WTC11 (cell line): ENCODE measurements at regions of chr5 and their contacts with region 1.

Region 1: GRCh38 chr5:141691867-141692532 is 10.0 kb upstream of the ARAP3 start:
- DNase-seq: peak; percentile 93
- ATAC-seq: peak; percentile 72
- H3K4me3 Mint-ChIP-seq: peak overlapping the region; percentile 69
- H3K27ac Mint-ChIP-seq: no peak overlapping the region
- H3K4me1 Mint-ChIP-seq: peaks cover 30% of the 10 kb centered on the region
- H3K27me3 Mint-ChIP-seq: peaks cover 10% of the 10 kb centered on the region
- CTCF ChIP-seq: peak; percentile 99

Region 2: GRCh38 chr5:141664732-141665461 is 27.1 kb before region 1 on chr5:
- CTCF ChIA-PET with region 1: interaction called, 26 read pairs
- POLR2A ChIA-PET with region 1: interaction called, 3 read pairs
- DNase-seq: peak; percentile 88
- ATAC-seq: peak; percentile 95
- H3K4me3 Mint-ChIP-seq: no peak overlapping the region
- H3K27ac Mint-ChIP-seq: no peak overlapping the region
- H3K4me1 Mint-ChIP-seq: peaks cover 11% of the 10 kb centered on the region
- H3K27me3 Mint-ChIP-seq: no peaks in the 10 kb centered on the region
- CTCF ChIP-seq: peak; percentile 92

Region 3: DNA sequence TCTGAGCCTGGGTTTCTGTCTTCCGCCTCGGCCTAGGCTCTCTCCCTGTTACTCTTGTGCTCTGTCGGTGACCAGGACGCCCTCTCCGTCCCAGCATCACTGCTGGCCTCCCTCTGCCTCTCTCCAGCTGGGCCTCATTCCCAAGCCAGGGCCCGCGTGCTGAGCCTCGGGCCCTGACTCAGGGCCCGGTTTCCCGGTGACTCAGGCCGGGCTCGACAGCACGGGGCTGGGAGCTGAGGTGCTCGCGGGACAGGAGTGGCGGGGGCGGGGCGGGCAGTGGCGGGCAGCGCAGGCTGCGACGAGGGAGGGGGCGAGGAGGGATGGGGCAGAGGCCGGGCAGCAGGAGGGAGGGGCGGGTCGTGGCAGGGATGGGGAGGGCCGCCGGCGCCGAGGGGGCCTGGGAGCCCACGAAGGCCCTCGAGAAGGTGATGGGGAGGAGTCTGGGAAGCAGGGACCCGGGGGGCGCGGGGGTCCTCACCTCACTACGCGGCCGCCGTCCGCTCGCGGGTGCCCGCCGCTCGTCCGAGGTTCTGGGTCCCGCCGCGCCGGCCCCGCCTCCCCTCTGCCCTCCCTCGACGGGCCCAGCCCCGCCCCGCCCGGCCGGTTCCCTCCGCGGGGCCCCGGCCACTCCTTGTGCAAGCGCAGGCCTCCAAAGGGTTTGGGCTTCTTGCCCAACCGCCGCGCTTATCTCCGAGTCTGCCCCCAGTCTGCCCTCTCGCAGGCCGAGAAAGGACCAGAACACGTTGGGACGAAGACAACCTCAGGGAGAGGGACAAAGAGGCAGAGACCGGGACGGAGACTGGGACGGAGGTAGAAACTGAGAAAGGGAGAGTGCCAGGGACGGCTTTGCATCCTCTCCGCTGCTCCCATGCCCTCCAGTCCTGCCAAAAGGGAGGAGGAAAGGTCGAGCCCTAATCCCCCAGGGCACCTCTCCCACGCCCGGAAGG is 10.0 kb before region 1 on chr5 and contains the start of gene ARAP3:
- CTCF ChIA-PET with region 1: interaction called, 36 read pairs
- POLR2A ChIA-PET with region 1: interaction called, 4 read pairs
- DNase-seq: peak; percentile 76
- ATAC-seq: peak; percentile 50
- H3K4me3 Mint-ChIP-seq: peak within 1 kb of the TSS; percentile 84
- H3K27ac Mint-ChIP-seq: peak within 1 kb of the TSS; percentile 96
- H3K4me1 Mint-ChIP-seq: peaks cover 50% of the 10 kb centered on the region
- H3K27me3 Mint-ChIP-seq: no peaks in the 10 kb centered on the region
- CTCF ChIP-seq: no peak
- total RNA-seq, gene ARAP3: 51.2 to 60.4 TPM (median 53.4 TPM) in 3 replicates

Region 4: GRCh38 chr5:141757402-141757801 is 65.4 kb after region 1 on chr5:
- CTCF ChIA-PET with region 1: interaction called, 24 read pairs
- POLR2A ChIA-PET with region 1: no interaction called
- DNase-seq: peak; percentile 70
- ATAC-seq: peak; percentile 62
- H3K4me3 Mint-ChIP-seq: peak overlapping the region; percentile 24; the same call in 1 of the 2 replicates
- H3K27ac Mint-ChIP-seq: no peak overlapping the region
- H3K4me1 Mint-ChIP-seq: peaks cover 49% of the 10 kb centered on the region
- H3K27me3 Mint-ChIP-seq: peaks cover 21% of the 10 kb centered on the region
- CTCF ChIP-seq: 0 out of 2 replicates have a peak, but pooled peaks have one; percentile 13

Region 5: DNA sequence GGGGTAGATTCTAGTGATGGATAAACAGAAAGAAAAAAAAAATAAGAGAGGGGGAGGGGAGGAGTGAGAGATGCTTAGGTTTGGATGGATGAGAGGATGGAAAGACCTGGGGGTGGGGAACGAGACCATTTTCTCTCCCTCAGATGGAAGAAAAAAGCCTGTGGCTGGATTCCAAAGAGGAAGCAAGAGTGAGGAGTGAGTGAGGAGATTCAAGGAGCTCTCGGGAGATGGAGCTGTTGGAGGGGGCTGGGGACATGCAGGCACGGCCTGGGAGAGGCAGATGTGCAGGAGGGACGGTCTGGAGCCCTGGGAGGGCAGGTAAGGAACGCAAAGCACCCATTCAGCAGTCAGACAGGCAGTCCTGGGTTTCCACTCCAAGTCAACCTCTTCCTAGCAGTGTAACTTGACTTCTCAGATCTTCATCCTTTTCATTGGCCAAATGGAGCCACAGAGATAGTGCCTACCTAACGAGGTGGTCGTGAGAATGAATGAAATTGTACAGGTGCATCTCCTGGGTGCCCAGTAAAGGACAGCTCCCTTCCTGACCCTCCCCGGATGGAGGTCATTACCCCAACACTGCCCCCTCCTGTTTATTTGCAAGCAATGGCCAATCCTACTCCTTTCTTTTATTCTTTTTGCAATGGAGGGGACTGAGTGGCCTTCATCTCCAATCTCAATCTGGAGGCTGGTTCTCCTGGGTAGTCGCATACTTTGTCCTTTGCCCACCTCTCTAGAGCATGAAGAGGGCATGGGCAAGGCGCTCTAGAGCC is 134.0 kb after region 1 on chr5:
- CTCF ChIA-PET with region 1: interaction called, 15 read pairs
- POLR2A ChIA-PET with region 1: no interaction called
- DNase-seq: no peak
- ATAC-seq: peak; percentile 69
- H3K4me3 Mint-ChIP-seq: no peak overlapping the region
- H3K27ac Mint-ChIP-seq: 0 out of 2 replicates have a peak overlapping the region, but pooled peaks have one; percentile 28
- H3K4me1 Mint-ChIP-seq: peaks cover 62% of the 10 kb centered on the region
- H3K27me3 Mint-ChIP-seq: no peaks in the 10 kb centered on the region
- CTCF ChIP-seq: peak; percentile 37

Region 6: DNA sequence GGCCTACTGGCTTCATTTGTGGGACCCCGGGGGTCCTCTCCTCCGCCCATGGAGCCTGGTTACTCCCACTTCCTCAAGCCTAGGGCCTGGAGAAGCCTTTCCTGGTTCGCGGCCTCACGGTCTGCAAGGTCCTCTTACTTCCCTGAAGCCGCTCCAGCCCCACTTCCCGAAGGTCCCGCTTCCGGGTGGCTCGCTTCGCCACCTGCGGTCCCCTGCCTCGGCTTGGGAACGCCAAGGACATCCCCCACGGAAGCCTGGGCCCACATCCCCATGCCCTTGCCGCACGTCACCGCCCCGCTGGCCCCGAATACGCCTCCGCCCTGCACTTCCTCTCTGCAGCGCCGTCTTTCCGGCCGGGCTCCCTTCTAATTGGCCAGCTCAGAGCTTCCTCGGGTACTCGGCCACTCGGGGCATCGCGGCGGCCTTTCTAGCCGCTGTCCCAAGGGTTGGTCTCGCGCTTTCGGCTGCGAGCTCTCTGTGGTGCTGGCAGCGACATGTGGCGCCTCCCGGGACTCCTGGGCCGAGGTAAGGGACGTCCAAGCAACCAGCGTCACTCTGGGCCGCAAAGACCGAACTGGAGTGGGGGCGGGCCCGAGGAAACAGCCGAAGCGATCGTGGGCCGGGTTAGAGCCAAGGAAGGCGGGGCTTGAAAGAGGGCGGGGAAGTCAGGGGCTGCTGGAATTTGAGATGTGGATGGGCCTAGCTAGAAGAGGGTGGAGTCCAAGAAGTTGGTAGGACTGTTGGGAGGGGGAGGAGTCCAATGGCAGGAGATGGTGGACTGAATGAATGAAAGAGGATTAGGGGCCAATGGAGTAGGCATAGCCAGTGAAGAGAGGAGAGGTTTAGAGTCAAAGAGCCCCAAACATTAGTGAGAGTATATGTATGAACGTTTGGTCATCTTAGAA is 231.7 kb after region 1 on chr5 and contains the start of gene DELE1:
- CTCF ChIA-PET with region 1: interaction called, 13 read pairs
- POLR2A ChIA-PET with region 1: no interaction called
- DNase-seq: peak; percentile 93
- ATAC-seq: peak; percentile 96
- H3K4me3 Mint-ChIP-seq: peak within 1 kb of the TSS; percentile 67
- H3K27ac Mint-ChIP-seq: peak within 1 kb of the TSS; percentile 87
- H3K4me1 Mint-ChIP-seq: peaks cover 15% of the 10 kb centered on the region
- H3K27me3 Mint-ChIP-seq: no peaks in the 10 kb centered on the region
- CTCF ChIP-seq: no peak
- total RNA-seq, gene DELE1: 79.3 to 83.8 TPM (median 81.5 TPM) in 3 replicates